Breast epithelium (tissue), 4 donors: ENCODE measurements at regions of chrX and their contacts with region 1.

Region 1: DNA sequence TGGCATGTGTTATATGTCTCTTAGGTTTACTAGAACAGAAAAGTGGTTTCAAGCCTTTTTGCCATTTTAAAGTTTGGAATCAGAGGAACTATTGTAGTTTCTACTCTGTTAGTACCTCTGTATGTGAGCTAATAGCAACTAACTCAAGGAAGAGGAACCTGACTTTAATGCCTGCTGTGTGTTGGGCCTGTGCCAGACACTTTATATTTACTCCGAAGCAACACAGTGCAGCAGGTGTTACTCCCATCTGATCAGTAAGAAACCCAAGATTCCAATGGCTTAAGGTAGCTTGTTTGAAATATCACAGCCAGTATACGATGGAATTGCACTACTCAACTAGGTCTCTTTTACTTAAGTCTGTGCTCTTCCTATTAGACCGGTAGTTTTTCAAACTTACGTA is 79.2 kb downstream of the USP9X start:
- DNase-seq: no peak
- H3K4me3 ChIP-seq: no peak overlapping the region
- H3K27ac ChIP-seq: no peak overlapping the region
- H3K4me1 ChIP-seq: no peaks in the 10 kb centered on the region
- H3K27me3 ChIP-seq: no peaks in the 10 kb centered on the region
- CTCF ChIP-seq: no peak
- POLR2A ChIP-seq: no peak

Region 2: DNA sequence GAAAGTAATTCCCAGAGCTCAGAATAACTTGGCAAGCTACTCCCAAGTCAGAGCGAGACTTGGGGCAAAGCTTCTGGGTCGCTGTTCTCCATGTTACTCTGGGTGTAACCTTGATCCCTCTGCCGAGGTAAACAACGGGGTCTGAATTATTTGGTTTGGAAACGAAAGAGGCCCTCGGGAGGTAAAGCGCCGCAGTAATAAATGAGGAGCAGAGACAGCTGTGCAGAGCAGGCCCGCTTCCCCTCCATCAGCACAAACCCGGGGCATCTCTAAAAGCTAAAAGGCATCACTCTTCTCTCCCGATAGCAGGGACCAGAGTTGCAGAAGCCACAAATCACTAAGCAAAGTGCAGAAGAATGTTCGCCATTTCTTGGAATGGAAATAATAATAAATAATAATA is 1628.2 kb before region 1 on chrX:
- intact Hi-C with region 1: no loop called
- DNase-seq: no peak
- H3K4me3 ChIP-seq: no peak overlapping the region
- H3K27ac ChIP-seq: no peak overlapping the region
- H3K4me1 ChIP-seq: no peaks in the 10 kb centered on the region
- H3K27me3 ChIP-seq: peaks cover 0 to 68% of the 10 kb centered on the region in 2 donors
- CTCF ChIP-seq: no peak
- POLR2A ChIP-seq: no peak

Region 3: DNA sequence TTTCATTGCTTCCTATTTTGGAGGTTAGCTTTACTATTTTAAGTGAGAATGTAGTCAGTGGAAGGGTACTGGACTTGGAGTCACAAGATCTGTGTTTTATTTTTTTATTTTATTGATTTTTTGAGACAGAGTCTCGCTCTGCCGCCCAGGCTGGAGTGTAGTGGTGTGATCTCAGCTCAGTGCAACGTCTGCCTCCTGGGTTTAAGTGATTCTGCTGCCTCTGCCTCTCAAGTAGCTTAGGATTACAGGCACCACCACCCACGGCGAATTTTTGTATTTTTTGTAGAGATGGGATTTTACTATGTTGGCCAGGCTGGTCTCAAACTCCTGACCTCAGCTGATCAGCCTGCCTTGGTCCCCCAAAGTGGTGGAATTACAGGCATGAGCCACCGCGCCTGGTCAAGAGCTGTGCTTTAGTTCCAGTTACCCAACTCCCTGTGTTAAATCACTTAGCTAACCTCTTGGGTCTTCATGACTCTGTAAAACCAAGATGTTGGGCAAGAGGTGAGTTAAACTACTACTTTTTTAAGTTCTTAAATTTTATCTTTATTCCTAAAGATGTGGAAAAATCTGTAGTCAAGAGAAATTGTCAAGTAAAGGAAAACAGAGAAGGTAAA is 68.0 kb before region 1 on chrX:
- intact Hi-C with region 1: no loop called
- DNase-seq: no peak
- H3K4me3 ChIP-seq: no peak overlapping the region
- H3K27ac ChIP-seq: no peak overlapping the region
- H3K4me1 ChIP-seq: peaks cover 0 to 4% of the 10 kb centered on the region in 2 donors
- H3K27me3 ChIP-seq: peaks cover 0 to 9% of the 10 kb centered on the region in 2 donors
- CTCF ChIP-seq: no peak
- POLR2A ChIP-seq: no peak

Region 4: DNA sequence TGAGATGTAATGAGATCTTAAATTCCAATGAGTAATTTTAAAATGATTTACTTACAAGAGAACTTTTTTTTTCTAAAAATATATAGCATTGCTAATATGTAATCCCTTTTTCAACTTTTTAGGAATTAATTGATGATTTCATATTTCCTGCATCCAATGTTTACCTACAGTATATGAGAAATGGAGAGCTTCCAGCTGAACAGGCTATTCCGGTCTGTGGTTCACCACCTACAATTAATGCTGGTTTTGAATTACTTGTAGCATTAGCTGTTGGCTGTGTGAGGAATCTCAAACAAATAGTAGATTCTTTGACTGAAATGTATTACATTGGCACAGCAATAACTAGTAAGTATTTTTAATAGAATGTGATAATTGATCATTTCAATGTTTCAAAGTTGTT is 34.0 kb after region 1 on chrX:
- intact Hi-C with region 1: loop called (anchors 2 kb)
- DNase-seq: peak in 1 of 2 donors; percentile 31
- H3K4me3 ChIP-seq: no peak overlapping the region
- H3K27ac ChIP-seq: no peak overlapping the region
- H3K4me1 ChIP-seq: no peaks in the 10 kb centered on the region
- H3K27me3 ChIP-seq: no peaks in the 10 kb centered on the region
- CTCF ChIP-seq: no peak
- POLR2A ChIP-seq: no peak

Region 5: DNA sequence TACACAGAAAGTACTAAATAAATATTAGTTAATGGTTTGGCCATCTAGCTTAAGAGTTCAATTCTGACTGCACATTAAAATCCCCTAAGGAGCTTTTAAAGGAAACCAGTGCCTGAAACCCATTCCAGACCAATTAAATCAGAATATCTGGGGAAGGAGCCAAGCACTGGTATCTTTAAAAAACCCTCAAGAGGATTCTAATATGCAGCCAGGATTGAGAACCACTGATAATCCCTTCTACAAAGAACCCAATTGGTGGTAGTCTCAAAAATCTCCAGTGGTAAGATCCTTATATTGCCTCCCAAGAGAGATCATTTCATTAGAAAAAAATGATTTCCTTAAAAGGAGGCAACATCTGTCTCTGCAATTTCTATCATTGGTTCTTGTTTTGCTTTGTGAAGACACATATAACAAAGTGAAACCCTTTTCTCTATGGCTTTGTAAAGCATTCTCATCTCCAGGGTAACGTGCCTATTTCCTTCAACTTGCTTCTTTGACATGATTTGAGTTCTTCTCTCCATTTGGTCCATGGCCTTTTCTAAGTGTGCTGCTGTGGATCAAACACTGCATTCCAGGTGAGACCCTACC is 527.8 kb after region 1 on chrX:
- intact Hi-C with region 1: loop called (anchors 5 kb)
- DNase-seq: no peak
- H3K4me3 ChIP-seq: no peak overlapping the region
- H3K27ac ChIP-seq: no peak overlapping the region
- H3K4me1 ChIP-seq: no peaks in the 10 kb centered on the region
- H3K27me3 ChIP-seq: peaks cover 0 to 23% of the 10 kb centered on the region in 2 donors
- CTCF ChIP-seq: no peak
- POLR2A ChIP-seq: no peak